ENCODE measurements at regions of chr5 and their contacts with region 1.

Region 1: GRCh38 chr5:94849821-94850736 is 231.6 kb downstream of the SLF1 start:
- DNase-seq: peak; percentile 31
- ATAC-seq: peak; percentile 95
- H3K4me3 Mint-ChIP-seq: no peak overlapping the region
- H3K27ac Mint-ChIP-seq: no peak overlapping the region
- H3K4me1 Mint-ChIP-seq: peaks cover 12% of the 10 kb centered on the region
- H3K27me3 Mint-ChIP-seq: peaks cover 3% of the 10 kb centered on the region
- CTCF ChIP-seq: peak; percentile 80

Region 2: DNA sequence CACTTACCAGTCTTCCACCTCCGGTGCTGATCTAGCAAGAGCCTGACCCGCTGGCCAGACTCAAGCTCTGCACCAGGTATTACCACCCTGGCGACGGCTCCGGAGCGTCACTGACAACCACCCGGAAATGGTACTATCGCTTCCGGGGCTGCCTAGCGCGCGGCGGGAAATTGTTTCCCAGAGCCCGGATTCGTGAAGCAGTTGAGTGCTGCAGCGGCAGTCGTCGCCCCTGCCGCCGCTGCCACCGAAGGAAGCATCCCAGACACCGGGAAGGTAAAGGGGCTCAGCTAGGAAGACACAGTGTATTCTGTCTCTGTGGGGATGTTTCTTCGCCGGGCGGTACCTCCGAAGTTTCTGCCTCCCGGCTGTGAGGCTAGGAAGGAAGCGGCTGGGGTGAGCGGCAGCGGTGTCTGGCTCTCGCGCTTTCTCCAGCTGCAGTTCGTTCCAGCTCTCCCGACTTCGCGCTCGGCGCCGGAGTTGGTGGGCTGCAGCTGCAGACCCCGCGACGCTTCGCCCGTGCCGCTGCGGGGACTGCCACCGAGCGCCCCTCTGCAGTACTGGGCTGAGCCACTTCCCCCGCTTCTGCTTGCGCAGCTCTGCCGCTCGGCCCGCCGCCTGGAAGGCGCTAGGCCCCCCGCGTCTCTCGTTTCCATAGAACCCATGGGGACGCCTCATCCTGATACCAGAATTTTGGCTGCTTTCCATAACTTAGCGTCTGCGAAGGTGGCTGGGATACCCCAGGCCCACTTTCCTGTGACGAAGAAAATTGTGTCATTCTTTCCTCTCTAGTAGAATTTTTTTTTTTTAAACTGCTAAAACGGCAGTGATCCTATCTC is 231.4 kb before region 1 on chr5 and contains the starts of genes KIAA0825 and SLF1:
- CTCF ChIA-PET with region 1: interaction called, 4 read pairs
- POLR2A ChIA-PET with region 1: no interaction called
- intact Hi-C with region 1: loop called (anchors 10 kb)
- DNase-seq: peak; percentile 93
- ATAC-seq: peak; percentile 88
- H3K4me3 Mint-ChIP-seq: peak within 1 kb of the TSS; percentile 81
- H3K27ac Mint-ChIP-seq: peak within 1 kb of the TSS; percentile 84
- H3K4me1 Mint-ChIP-seq: peaks cover 34% of the 10 kb centered on the region
- H3K27me3 Mint-ChIP-seq: no peaks in the 10 kb centered on the region
- CTCF ChIP-seq: no peak
- total RNA-seq, gene KIAA0825: 0.32 to 0.54 TPM
- total RNA-seq, gene SLF1: 11.5 to 14.5 TPM

Region 3: DNA sequence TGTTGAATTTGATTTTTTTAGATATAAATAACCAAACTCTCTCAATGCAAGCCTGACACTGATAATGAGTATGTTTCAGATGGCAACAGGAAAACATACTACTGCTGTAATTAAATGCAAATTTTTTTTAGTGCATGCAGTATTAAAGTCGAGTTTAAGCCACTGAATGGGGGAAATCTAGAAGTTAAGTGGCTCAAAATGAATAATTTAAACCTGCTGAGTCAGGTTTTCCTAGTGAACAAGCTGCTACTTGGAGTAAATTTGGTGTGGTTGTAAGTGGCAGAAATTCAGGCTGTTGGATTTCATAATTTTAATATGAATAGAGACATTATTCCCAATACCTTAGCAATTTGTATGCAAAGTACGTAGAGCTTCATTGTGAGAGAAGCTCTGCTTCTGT is 109.8 kb before region 1 on chr5:
- CTCF ChIA-PET with region 1: interaction called, 21 read pairs
- POLR2A ChIA-PET with region 1: interaction called, 4 read pairs
- intact Hi-C with region 1: no loop called
- DNase-seq: no peak
- ATAC-seq: no peak
- H3K4me3 Mint-ChIP-seq: no peak overlapping the region
- H3K27ac Mint-ChIP-seq: no peak overlapping the region
- H3K4me1 Mint-ChIP-seq: no peaks in the 10 kb centered on the region
- H3K27me3 Mint-ChIP-seq: no peaks in the 10 kb centered on the region
- CTCF ChIP-seq: no peak

Region 4: DNA sequence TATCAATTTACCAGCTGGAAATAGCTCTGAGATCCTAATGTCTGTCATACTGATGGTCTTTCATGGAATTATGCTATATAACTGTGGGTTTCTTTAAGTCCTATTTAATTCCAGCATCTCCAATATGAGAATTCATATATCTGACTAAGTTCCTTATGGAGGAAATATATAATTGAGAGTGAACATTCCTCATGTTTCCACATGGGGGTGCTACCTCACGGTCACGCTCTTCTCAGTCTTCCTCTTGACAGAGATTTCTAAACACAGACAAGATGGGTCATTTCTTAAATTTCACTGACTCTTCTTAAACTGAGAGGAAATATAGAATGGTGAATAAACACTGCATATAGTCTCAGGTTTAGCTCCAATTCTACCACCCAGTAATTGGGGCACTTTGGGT is 19.6 kb before region 1 on chr5:
- CTCF ChIA-PET with region 1: interaction called, 14 read pairs
- POLR2A ChIA-PET with region 1: no interaction called
- intact Hi-C with region 1: no loop called
- DNase-seq: no peak
- ATAC-seq: no peak
- H3K4me3 Mint-ChIP-seq: no peak overlapping the region
- H3K27ac Mint-ChIP-seq: no peak overlapping the region
- H3K4me1 Mint-ChIP-seq: peaks cover 5% of the 10 kb centered on the region
- H3K27me3 Mint-ChIP-seq: peaks cover 2% of the 10 kb centered on the region
- CTCF ChIP-seq: peak; percentile 40

Measured in activated CD8-positive, alpha-beta T cell treated with anti-CD3 and anti-CD28 coated beads for 36 hours (primary cell).